Naive thymus-derived CD4-positive, alpha-beta T cell (primary cell): ENCODE measurements at regions of chr17 and their contacts with region 1.

Region 1: DNA sequence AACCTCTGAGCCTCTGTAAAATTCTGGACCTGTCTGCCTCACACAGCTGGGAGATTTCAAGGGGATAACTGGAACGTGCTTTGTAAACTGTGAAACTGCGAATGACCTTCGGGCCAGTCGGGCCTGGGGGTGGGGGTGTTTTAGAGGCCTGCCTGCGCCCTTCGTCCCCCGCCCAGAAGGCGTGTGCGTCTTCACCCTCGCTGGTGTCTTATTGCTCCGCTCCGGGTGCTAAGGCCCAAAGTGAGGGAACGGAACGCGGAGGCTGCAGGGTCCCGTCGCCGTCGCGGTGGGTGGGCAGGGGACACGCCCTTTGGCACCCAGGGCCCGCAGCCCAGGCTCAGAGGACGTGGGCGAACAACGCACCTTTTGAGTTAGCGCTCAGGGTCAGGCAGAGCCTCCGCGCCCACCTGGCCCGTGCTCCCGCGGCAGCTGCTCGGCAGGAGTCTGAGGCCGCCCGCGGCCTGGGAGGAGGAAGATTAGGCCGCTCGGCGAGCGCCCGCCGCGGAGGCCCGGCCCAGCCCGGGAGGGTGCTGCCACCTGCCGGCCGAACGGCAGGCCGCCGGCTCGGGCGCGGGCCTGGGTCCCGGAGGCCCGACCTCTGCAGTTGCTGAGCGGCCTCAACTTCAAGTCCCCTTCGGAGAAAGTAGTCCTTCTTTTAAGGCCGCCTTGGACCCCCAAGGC is 29.7 kb downstream of the DCAKD start:
- DNase-seq: peak; percentile 34 to 81 (median 60)
- ATAC-seq: peak; percentile 91
- H3K4me3 ChIP-seq: peak overlapping the region; percentile 47
- H3K4me3 Mint-ChIP-seq: peak overlapping the region; percentile 35 to 82 (median 67)
- H3K27ac ChIP-seq: peak overlapping the region; percentile 14
- H3K27ac Mint-ChIP-seq: peak overlapping the region in 2 of 9 donors; percentile 5 to 74
- H3K4me1 ChIP-seq: peaks cover 15 to 17% of the 10 kb centered on the region in 2 donors
- H3K4me1 Mint-ChIP-seq: peaks cover 6 to 26% (median 18%) of the 10 kb centered on the region in 7 donors
- H3K27me3 ChIP-seq: peaks cover 0 to 11% of the 10 kb centered on the region in 2 donors
- H3K27me3 Mint-ChIP-seq: peaks cover 32 to 35% (median 34%) of the 10 kb centered on the region in 5 donors

Region 2: GRCh38 chr17:44911133-44912001 is 110.4 kb before region 1 on chr17:
- CTCF ChIA-PET with region 1: interaction called, 3 read pairs
- POLR2A ChIA-PET with region 1: no interaction called
- intact Hi-C with region 1: loop called in 1 of 2 experiments (anchors 1 kb)
- DNase-seq: peak in 8 of 9 donors; percentile 22 to 50 (median 37)
- ATAC-seq: peak; percentile 83
- H3K4me3 ChIP-seq: peak overlapping the region; percentile 24
- H3K4me3 Mint-ChIP-seq: peak overlapping the region; percentile 17 to 72 (median 58)
- H3K27ac ChIP-seq: no peak overlapping the region
- H3K27ac Mint-ChIP-seq: peak overlapping the region in 1 of 9 donors; percentile 65
- H3K4me1 ChIP-seq: peaks cover 0 to 5% of the 10 kb centered on the region in 2 donors
- H3K4me1 Mint-ChIP-seq: peaks cover 6 to 16% (median 10%) of the 10 kb centered on the region in 7 donors
- H3K27me3 ChIP-seq: no peaks in the 10 kb centered on the region
- H3K27me3 Mint-ChIP-seq: peaks cover 13 to 39% (median 19%) of the 10 kb centered on the region in 5 donors

Region 3: GRCh38 chr17:44919885-44920564 is 101.7 kb before region 1 on chr17:
- CTCF ChIA-PET with region 1: interaction called, 19 read pairs
- POLR2A ChIA-PET with region 1: no interaction called
- intact Hi-C with region 1: loop called (anchors 1 kb)
- DNase-seq: peak in 8 of 9 donors; percentile 20 to 65 (median 50)
- ATAC-seq: peak; percentile 92
- H3K4me3 ChIP-seq: no peak overlapping the region
- H3K4me3 Mint-ChIP-seq: no peak overlapping the region
- H3K27ac ChIP-seq: no peak overlapping the region
- H3K27ac Mint-ChIP-seq: no peak overlapping the region
- H3K4me1 ChIP-seq: no peaks in the 10 kb centered on the region
- H3K4me1 Mint-ChIP-seq: no peaks in the 10 kb centered on the region
- H3K27me3 ChIP-seq: no peaks in the 10 kb centered on the region
- H3K27me3 Mint-ChIP-seq: peaks cover 0 to 44% (median 19%) of the 10 kb centered on the region in 5 donors

Region 4: GRCh38 chr17:44947461-44948314 is 74.1 kb before region 1 on chr17 and contains the start of gene KIF18B:
- CTCF ChIA-PET with region 1: no interaction called
- POLR2A ChIA-PET with region 1: no interaction called
- intact Hi-C with region 1: loop called in 1 of 2 experiments (anchors 1 kb)
- DNase-seq: peak; percentile 73 to 91 (median 86)
- ATAC-seq: peak; percentile 99
- H3K4me3 ChIP-seq: peak within 1 kb of the TSS; percentile 83
- H3K4me3 Mint-ChIP-seq: peak within 1 kb of the TSS; percentile 85 to 98 (median 93)
- H3K27ac ChIP-seq: peak within 1 kb of the TSS; percentile 69
- H3K27ac Mint-ChIP-seq: peak within 1 kb of the TSS; percentile 86 to 98 (median 93)
- H3K4me1 ChIP-seq: peaks cover 5 to 6% of the 10 kb centered on the region in 2 donors
- H3K4me1 Mint-ChIP-seq: peaks cover 0 to 40% (median 5%) of the 10 kb centered on the region in 7 donors
- H3K27me3 ChIP-seq: no peaks in the 10 kb centered on the region
- H3K27me3 Mint-ChIP-seq: peaks cover 0 to 7% (median 0%) of the 10 kb centered on the region in 5 donors
- total RNA-seq, gene KIF18B: 0.17 to 57.2 TPM in 2 of 5 experiments, not detected in the others

Region 5: DNA sequence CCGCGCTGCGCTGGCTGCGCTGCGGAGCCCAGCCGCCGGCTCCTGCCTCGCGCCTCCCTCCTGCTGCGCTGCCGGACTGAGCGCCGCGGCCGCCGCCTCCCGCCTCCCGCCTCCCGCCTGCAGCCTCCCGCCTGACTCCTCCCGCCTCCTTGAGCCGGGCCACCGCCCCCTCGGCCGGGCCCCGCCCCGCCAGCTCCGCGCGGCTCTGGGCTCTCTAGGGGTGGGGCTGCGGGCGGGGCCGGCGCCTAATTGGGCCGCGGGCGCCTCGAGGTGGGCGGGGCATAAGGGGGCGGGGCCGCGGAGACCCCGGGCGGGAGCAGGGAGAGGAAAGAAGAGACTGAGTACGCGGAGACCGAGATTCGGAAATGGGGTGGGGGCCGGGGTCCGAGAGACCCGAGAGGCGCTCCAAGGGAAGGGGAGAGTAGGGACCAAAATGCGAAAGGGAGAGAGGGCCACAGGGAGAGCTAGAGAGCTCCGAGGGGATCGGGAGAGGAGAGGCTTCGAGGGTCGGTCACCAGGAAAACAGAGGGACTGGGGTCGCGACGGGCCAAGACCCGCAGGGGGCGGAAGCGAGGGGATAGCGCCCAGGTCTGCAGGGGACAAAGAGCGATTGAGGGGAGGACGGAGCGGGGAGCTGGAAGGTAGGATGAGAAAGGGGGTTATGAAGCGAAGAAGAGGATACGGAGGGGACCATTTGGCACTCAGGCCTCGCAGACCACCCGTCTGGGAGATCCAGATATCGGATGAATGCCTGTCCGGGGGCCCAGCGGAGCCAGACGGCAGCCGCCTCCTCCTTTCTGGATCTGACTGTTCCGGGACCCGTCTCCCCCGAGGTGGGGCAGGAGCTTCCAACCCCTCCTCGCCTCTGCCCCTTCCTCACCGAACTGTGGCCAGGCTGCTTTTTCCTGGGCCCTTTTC is 53.3 kb before region 1 on chr17 and contains the start of gene C1QL1:
- CTCF ChIA-PET with region 1: no interaction called
- POLR2A ChIA-PET with region 1: no interaction called
- intact Hi-C with region 1: loop called (anchors 2 kb)
- DNase-seq: peak; percentile 58 to 93 (median 69)
- ATAC-seq: peak; percentile 99
- H3K4me3 ChIP-seq: peak within 1 kb of the TSS; percentile 33
- H3K4me3 Mint-ChIP-seq: peak within 1 kb of the TSS; percentile 64 to 87 (median 78)
- H3K27ac ChIP-seq: no peak within 1 kb of the TSS
- H3K27ac Mint-ChIP-seq: peak within 1 kb of the TSS in 2 of 9 donors; percentile 16 to 55
- H3K4me1 ChIP-seq: peaks cover 19 to 24% of the 10 kb centered on the region in 2 donors
- H3K4me1 Mint-ChIP-seq: peaks cover 23 to 40% (median 29%) of the 10 kb centered on the region in 7 donors
- H3K27me3 ChIP-seq: peaks cover 14 to 21% of the 10 kb centered on the region in 2 donors
- H3K27me3 Mint-ChIP-seq: peaks cover 30 to 84% (median 45%) of the 10 kb centered on the region in 5 donors
- total RNA-seq, gene C1QL1: 0.29 TPM in 1 of 5 experiments, not detected in the others

Region 6: DNA sequence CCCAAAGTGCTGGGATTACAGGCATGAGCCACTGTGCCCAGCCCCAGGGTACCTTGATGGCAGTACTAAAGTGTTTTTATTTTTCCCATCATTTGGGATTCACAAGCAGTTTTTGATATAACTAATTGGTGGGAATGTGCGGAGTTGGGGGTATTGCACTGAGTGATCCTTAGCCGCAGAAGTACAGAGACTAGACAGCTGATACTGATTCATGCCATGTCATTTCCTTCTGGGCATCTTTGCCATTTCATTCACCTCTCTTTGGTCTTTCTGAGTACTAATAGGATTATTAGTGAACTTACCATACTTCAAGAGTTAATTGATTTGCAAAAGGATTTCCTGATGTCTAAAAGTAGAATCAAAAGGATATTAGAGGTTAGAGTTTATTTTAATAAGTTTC is 49.1 kb after region 1 on chr17:
- CTCF ChIA-PET with region 1: no interaction called
- POLR2A ChIA-PET with region 1: no interaction called
- intact Hi-C with region 1: no loop called
- DNase-seq: no peak
- ATAC-seq: no peak
- H3K4me3 ChIP-seq: no peak overlapping the region
- H3K4me3 Mint-ChIP-seq: no peak overlapping the region
- H3K27ac ChIP-seq: no peak overlapping the region
- H3K27ac Mint-ChIP-seq: no peak overlapping the region
- H3K4me1 ChIP-seq: no peaks in the 10 kb centered on the region
- H3K4me1 Mint-ChIP-seq: peaks cover 12 to 35% (median 28%) of the 10 kb centered on the region in 7 donors
- H3K27me3 ChIP-seq: no peaks in the 10 kb centered on the region
- H3K27me3 Mint-ChIP-seq: no peaks in the 10 kb centered on the region

Region 7: GRCh38 chr17:45098869-45099616 is 77.3 kb after region 1 on chr17:
- CTCF ChIA-PET with region 1: interaction called, 5 read pairs
- POLR2A ChIA-PET with region 1: no interaction called
- intact Hi-C with region 1: loop called (anchors 1 to 5 kb)
- DNase-seq: peak; percentile 38 to 77 (median 66)
- ATAC-seq: peak; percentile 89
- H3K4me3 ChIP-seq: no peak overlapping the region
- H3K4me3 Mint-ChIP-seq: no peak overlapping the region
- H3K27ac ChIP-seq: no peak overlapping the region
- H3K27ac Mint-ChIP-seq: peak overlapping the region in 6 of 9 donors; percentile 4 to 87 (median 62)
- H3K4me1 ChIP-seq: no peaks in the 10 kb centered on the region
- H3K4me1 Mint-ChIP-seq: peaks cover 0 to 6% (median 0%) of the 10 kb centered on the region in 7 donors
- H3K27me3 ChIP-seq: no peaks in the 10 kb centered on the region
- H3K27me3 Mint-ChIP-seq: no peaks in the 10 kb centered on the region

Region 8: GRCh38 chr17:45990886-45991285 is 969.1 kb after region 1 on chr17:
- CTCF ChIA-PET with region 1: no interaction called
- POLR2A ChIA-PET with region 1: no interaction called
- intact Hi-C with region 1: no loop called
- DNase-seq: no peak
- ATAC-seq: no peak
- H3K4me3 ChIP-seq: no peak overlapping the region
- H3K4me3 Mint-ChIP-seq: no peak overlapping the region
- H3K27ac ChIP-seq: no peak overlapping the region
- H3K27ac Mint-ChIP-seq: no peak overlapping the region
- H3K4me1 ChIP-seq: no peaks in the 10 kb centered on the region
- H3K4me1 Mint-ChIP-seq: no peaks in the 10 kb centered on the region
- H3K27me3 ChIP-seq: no peaks in the 10 kb centered on the region
- H3K27me3 Mint-ChIP-seq: peaks cover 0 to 4% (median 0%) of the 10 kb centered on the region in 5 donors